AG04450 (cell line): ENCODE measurements at regions of chr9 and their contacts with region 1.

Region 1: GRCh38 chr9:130473566-130473965 is 28.8 kb downstream of the ASS1 start:
- DNase-seq: no peak
- H3K4me3 ChIP-seq: no peak overlapping the region
- H3K27ac ChIP-seq: no peak overlapping the region
- H3K27me3 ChIP-seq: peaks cover 29% of the 10 kb centered on the region
- CTCF ChIP-seq: no peak

Region 2: GRCh38 chr9:130382636-130383349 is 90.8 kb before region 1 on chr9:
- CTCF ChIA-PET with region 1: no interaction called
- POLR2A ChIA-PET with region 1: no interaction called
- DNase-seq: no peak
- H3K4me3 ChIP-seq: no peak overlapping the region
- H3K27ac ChIP-seq: no peak overlapping the region
- H3K27me3 ChIP-seq: peaks cover 41% of the 10 kb centered on the region
- CTCF ChIP-seq: no peak

Region 3: DNA sequence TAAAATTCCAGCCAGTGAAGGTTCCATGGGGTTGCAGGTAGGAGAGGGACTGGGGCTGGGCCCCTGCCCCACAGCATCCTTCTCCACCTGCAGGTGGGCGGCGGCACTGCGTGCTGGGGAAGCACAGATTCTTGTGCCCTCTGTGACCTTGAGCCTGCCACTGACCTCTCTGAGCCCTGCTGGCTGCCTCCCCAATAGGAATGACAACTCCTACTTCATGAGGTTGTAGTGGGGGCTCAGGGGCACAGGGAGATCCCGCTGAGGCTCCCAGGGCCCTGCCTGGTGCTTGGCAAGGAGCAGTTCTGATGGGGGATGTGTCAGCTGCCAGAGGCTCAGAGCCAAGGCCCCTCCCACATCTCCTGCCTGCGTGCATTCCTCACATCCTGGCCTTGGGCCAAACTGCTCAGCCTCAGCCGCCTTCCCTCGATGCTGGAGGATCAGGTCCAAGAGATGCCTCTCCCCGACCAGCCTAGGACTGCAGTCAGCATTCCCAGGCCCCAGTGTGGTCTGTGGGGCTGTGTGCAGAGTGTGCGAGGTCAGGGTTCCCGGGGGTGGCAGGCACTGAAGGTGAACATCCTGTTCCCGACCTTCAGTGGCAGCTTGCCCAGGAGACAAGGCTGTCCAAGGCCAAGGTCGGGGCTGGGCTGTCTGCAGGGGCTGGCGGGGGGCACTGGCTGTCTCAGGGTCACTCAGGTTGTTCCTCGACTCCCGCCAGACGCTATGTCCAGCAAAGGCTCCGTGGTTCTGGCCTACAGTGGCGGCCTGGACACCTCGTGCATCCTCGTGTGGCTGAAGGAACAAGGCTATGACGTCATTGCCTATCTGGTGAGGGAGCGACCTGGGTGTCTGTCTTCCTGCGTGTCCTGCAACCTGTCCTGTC is 21.8 kb before region 1 on chr9:
- CTCF ChIA-PET with region 1: no interaction called
- POLR2A ChIA-PET with region 1: interaction called, 10 read pairs
- DNase-seq: peak; percentile 89
- H3K4me3 ChIP-seq: no peak overlapping the region
- H3K27ac ChIP-seq: peak overlapping the region; percentile 31
- H3K27me3 ChIP-seq: no peaks in the 10 kb centered on the region
- CTCF ChIP-seq: peak; percentile 65